GM10248 (cell line): ENCODE measurements at regions of chr5 and their contacts with region 1.

Region 1: GRCh38 chr5:61319388-61320146 is 12.5 kb upstream of the ZSWIM6 start:
- DNase-seq: peak; percentile 82
- CTCF ChIP-seq: no peak

Region 2: DNA sequence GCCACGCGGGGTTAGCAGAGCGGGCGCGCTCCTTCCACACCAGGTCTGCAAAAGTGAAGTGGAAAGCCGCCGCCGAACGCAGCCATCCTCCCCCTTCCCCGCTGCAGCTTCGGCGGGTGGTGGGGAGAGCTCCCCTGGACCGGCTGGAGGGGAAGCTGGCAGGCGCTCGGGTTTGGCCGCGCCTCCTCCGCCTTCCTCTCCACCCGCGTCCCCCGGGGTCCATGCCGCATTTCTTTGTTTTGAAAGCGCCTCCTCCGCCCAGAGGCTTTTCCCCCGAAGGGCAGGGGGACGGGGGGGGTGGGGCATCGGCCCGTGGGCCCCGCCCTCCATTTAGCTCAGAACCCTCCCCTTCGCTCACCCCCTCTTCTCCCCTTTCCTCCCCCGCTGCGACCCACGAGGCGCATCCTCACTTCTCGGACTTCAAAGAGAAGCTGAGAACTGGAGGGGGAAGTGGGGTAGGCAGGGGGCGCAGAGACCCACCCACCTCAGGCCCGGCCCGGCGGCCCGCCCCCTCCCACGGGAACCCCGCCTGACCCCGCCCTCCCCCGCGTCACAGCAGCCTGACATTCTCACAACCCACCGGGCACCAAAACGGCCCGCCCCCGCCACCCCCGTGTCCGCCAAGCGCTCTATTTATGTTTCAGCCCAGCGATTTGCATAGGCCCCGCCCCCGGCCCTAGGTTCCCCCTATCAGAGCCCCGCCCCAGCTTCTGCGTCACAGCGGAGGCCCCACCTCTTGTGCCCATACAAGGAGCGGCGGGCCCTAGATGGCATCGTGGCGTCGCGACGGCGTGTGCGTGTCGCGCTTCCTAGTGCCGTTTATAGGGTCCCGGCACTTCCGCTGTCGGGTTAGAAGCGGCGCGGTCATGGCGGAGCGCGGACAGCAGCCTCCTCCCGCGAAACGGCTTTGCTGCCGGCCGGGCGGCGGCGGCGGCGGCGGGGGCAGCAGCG is 12.1 kb after region 1 on chr5 and contains the start of gene ZSWIM6:
- CTCF ChIA-PET with region 1: interaction called, 20 read pairs
- POLR2A ChIA-PET with region 1: no interaction called
- DNase-seq: peak; percentile 97
- CTCF ChIP-seq: no peak